ENCODE measurements at regions of chr14 and their contacts with region 1.

Region 1: DNA sequence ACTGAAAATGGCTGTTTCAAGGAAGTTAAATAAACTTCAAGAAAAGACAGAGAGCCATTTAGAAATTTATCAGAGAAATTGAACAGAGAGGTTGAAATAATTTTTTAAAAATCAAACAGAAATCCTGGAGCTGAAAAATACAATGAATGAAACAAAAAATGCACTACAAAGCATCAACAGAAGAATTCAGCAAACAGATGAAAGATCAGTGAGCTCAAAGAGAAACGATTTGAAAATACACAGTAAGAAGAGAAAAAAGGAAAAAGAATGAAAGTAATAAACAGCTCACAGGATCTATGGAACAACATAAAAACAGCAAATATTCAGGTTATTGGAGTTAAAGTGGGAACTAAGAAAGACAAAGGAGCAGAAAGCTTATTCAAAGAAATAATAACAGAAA is 26.2 kb downstream of the COX16 start:
- DNase-seq: no peak
- H3K4me3 ChIP-seq: no peak overlapping the region
- H3K27ac ChIP-seq: no peak overlapping the region
- H3K4me1 ChIP-seq: no peaks in the 10 kb centered on the region
- H3K27me3 ChIP-seq: no peaks in the 10 kb centered on the region
- CTCF ChIP-seq: no peak
- EP300 ChIP-seq: no peak
- POLR2A ChIP-seq: no peak

Region 2: GRCh38 chr14:70350078-70350477 is 16.8 kb after region 1 on chr14:
- intact Hi-C with region 1: loop called (anchors 1 kb)
- DNase-seq: no peak
- H3K4me3 ChIP-seq: no peak overlapping the region
- H3K27ac ChIP-seq: no peak overlapping the region
- H3K4me1 ChIP-seq: peaks cover 0 to 6% (median 0%) of the 10 kb centered on the region in 4 donors
- H3K27me3 ChIP-seq: no peaks in the 10 kb centered on the region
- CTCF ChIP-seq: no peak
- EP300 ChIP-seq: no peak
- POLR2A ChIP-seq: no peak